ENCODE measurements at regions of chr10 and their contacts with region 1.

Region 1: GRCh38 chr10:119416855-119417254 is 125.7 kb downstream of the RGS10 start:
- DNase-seq: peak; percentile 56 to 75 (median 72)
- H3K4me3 ChIP-seq: no peak overlapping the region
- H3K4me3 Mint-ChIP-seq: no peak overlapping the region
- H3K27ac ChIP-seq: no peak overlapping the region
- H3K27ac Mint-ChIP-seq: peak overlapping the region in 1 of 7 donors; percentile 57
- H3K4me1 ChIP-seq: peaks cover 0 to 4% of the 10 kb centered on the region in 2 donors
- H3K4me1 Mint-ChIP-seq: peaks cover 8% of the 10 kb centered on the region
- H3K27me3 ChIP-seq: no peaks in the 10 kb centered on the region
- H3K27me3 Mint-ChIP-seq: peaks cover 0 to 8% (median 5%) of the 10 kb centered on the region in 3 donors
- CTCF ChIP-seq: peak; percentile 88

Region 2: GRCh38 chr10:118720685-118721538 is 695.9 kb before region 1 on chr10:
- intact Hi-C with region 1: no loop called
- DNase-seq: peak; percentile 47 to 71 (median 47)
- H3K4me3 ChIP-seq: no peak overlapping the region
- H3K4me3 Mint-ChIP-seq: no peak overlapping the region
- H3K27ac ChIP-seq: no peak overlapping the region
- H3K27ac Mint-ChIP-seq: no peak overlapping the region
- H3K4me1 ChIP-seq: no peaks in the 10 kb centered on the region
- H3K4me1 Mint-ChIP-seq: no peaks in the 10 kb centered on the region
- H3K27me3 ChIP-seq: no peaks in the 10 kb centered on the region
- H3K27me3 Mint-ChIP-seq: no peaks in the 10 kb centered on the region
- CTCF ChIP-seq: peak; percentile 95

Region 3: DNA sequence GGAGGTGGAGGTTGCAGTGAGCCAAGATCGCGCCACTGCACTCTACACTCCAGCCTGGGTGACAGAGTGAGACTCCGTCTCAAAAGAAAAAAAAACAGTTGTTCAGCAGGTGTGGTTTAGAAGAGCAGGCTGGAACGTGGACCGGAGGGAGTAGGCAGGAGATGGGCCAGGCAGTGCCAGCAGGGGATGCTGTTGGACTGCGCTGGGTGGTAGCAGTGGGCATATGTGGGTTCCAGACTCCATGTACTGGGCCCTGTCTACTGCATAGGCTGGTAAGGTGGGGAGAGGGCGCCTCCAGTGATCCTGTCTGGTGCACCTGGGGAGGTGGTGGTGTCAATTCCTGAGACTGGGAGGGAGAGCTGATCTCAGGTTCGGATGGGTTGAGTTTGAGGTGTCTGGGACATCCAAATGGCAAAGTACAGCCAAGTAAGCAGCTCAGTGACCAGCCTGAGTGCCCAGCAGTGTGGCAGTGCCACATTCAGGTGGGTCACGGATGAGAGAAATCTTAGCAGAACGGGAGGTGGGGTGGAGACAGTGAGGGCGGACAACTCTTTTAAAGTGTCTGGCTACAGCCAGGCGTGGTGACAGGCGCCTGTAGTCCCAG is 277.3 kb before region 1 on chr10:
- intact Hi-C with region 1: loop called in 1 of 2 experiments (anchors 5 kb)
- DNase-seq: peak; percentile 29 to 50 (median 48)
- H3K4me3 ChIP-seq: no peak overlapping the region
- H3K4me3 Mint-ChIP-seq: no peak overlapping the region
- H3K27ac ChIP-seq: peak overlapping the region; percentile 44 to 66
- H3K27ac Mint-ChIP-seq: peak overlapping the region in 5 of 7 donors; percentile 75 to 91 (median 88)
- H3K4me1 ChIP-seq: peaks cover 37 to 38% of the 10 kb centered on the region in 2 donors
- H3K4me1 Mint-ChIP-seq: peaks cover 34% of the 10 kb centered on the region
- H3K27me3 ChIP-seq: no peaks in the 10 kb centered on the region
- H3K27me3 Mint-ChIP-seq: peaks cover 0 to 3% (median 0%) of the 10 kb centered on the region in 3 donors
- CTCF ChIP-seq: peak; percentile 78

Region 4: DNA sequence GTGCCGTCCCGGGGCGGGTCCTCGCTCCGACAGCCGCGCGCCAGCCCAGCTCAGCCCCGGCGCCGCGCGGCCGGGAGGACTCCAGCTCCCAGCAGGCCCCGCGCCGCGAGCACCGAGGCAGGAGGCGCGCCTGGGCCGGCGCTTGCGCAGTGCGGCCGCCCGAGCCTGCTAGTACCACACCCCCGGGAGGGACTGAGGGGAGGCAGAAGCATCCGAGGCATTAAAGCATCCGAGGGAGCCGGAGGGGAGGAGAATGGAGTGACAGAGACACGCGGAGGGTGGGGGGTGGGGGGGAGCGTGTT is 209.5 kb before region 1 on chr10 and contains the start of gene GRK5:
- intact Hi-C with region 1: loop called (anchors 2 kb)
- DNase-seq: peak; percentile 91 to 93 (median 92)
- H3K4me3 ChIP-seq: peak within 1 kb of the TSS; percentile 48 to 85 (median 80)
- H3K4me3 Mint-ChIP-seq: peak within 1 kb of the TSS; percentile 96 to 97
- H3K27ac ChIP-seq: peak within 1 kb of the TSS; percentile 73 to 86
- H3K27ac Mint-ChIP-seq: peak within 1 kb of the TSS; percentile 90 to 98 (median 97)
- H3K4me1 ChIP-seq: peaks cover 33 to 44% of the 10 kb centered on the region in 2 donors
- H3K4me1 Mint-ChIP-seq: peaks cover 41% of the 10 kb centered on the region
- H3K27me3 ChIP-seq: no peaks in the 10 kb centered on the region
- H3K27me3 Mint-ChIP-seq: peaks cover 3 to 16% (median 16%) of the 10 kb centered on the region in 3 donors
- CTCF ChIP-seq: no peak
- polyA plus RNA-seq, gene GRK5: 1.2 to 6.5 (median 2.8) TPM

Region 5: DNA sequence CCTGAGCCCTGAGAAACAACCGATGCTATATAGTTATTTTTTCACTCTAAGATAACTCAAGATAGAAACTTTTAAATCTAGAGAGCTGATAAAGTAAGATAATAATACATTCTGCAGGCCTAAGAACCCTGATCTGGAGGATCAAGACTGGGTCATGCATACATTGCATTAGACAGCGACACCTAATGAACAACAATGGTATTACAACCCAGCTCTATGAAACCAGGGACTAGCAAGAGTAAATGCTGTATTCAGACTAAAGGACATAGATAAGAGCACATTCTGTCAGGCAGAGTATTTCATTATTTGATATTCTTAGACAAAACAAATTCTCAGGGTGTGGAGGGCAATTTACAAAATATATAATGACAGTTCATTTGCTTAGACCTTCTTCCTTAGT is 60.9 kb before region 1 on chr10:
- intact Hi-C with region 1: loop called in 1 of 2 experiments (anchors 10 kb)
- DNase-seq: no peak
- H3K4me3 ChIP-seq: no peak overlapping the region
- H3K4me3 Mint-ChIP-seq: no peak overlapping the region
- H3K27ac ChIP-seq: no peak overlapping the region
- H3K27ac Mint-ChIP-seq: no peak overlapping the region
- H3K4me1 ChIP-seq: peaks cover 0 to 6% of the 10 kb centered on the region in 2 donors
- H3K4me1 Mint-ChIP-seq: peaks cover 11% of the 10 kb centered on the region
- H3K27me3 ChIP-seq: no peaks in the 10 kb centered on the region
- H3K27me3 Mint-ChIP-seq: peaks cover 3 to 8% (median 6%) of the 10 kb centered on the region in 3 donors
- CTCF ChIP-seq: peak; percentile 46